ENCODE measurements at regions of chr4 and their contacts with region 1.

Region 1: GRCh38 chr4:87235020-87235671 is 14.7 kb upstream of the KLHL8 start:
- DNase-seq: no peak
- H3K4me3 ChIP-seq: peak overlapping the region; percentile 47
- H3K27ac ChIP-seq: no peak overlapping the region
- H3K4me1 ChIP-seq: no peaks in the 10 kb centered on the region
- CTCF ChIP-seq: no peak

Region 2: DNA sequence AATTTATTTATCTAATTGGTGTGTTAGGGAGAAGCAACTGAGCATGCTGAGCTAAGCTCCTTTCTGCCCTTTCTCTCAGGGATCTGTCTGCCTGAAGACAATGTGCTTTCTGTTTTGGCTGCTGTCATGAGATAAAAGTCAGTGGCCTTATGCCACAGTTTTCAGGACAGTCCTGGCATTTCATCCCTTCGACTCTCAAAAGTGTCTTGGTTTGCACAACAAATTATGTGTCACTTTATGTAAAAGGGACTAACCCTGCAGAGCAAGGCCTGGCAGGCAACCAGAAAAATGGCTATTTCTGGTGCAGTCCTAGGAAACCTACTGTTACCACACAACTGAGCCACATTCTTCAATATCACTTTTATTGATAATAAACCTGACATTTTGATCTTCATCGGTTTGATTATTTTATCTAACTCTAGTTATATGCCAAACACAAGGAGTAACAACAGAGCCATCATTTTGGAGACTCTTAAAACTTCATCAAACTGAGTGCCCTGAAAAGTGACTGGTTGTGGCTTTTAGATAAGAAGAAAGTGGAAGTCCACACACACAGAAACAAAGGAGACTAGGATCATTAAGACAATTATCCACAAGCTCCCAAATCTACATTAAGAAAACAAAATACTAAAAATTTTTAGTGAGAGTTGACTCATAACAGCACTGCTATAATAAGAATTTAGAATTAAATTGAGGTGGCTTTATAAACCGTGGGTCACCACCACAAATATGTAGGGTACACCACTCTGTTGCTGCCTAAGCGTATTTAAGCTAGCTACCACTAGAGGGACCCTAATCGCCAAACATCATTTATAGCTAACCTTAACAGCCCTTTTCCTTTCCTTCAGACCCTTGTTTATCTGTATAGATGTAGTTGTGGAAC is 736.9 kb before region 1 on chr4:
- CTCF ChIA-PET with region 1: no interaction called
- POLR2A ChIA-PET with region 1: no interaction called
- intact Hi-C with region 1: loop called (anchors 5 kb)
- DNase-seq: peak; percentile 50
- H3K4me3 ChIP-seq: no peak overlapping the region
- H3K27ac ChIP-seq: no peak overlapping the region
- H3K4me1 ChIP-seq: no peaks in the 10 kb centered on the region
- CTCF ChIP-seq: peak; percentile 92

Region 3: DNA sequence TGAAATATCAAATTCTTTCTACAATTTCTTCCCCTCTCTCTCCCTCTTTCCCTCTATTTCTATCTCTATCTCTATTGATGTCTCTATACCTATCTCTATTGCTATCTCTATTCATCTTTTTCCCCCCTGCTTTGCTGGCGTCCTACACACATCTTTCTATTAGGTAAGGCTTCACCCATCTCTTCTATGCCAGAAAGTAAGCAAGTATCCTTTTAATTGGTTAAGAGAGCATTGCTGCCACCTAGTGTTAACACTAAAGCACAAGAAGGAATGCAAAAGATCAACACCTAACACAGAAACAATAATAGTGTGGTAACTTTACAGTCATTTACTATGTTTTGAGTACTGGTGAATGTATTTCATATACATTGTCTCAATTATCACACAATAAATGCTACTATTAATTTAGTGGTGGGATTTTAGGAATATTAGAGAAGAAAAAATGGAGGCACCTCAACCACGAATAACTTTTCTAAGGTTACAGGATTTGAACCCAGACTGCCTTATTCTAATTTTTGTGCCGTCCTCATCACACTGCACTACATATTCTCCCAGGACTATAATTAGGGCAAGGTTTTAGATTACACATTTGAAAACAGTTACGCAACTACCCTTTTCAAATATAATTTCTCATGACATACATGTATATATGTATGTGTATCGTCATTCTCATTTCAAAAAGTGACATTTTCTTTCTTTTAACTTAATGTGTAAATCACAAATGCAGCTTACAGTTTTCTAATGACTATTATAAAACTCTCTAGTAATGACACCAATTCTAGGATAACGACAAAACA is 339.3 kb before region 1 on chr4:
- CTCF ChIA-PET with region 1: no interaction called
- POLR2A ChIA-PET with region 1: no interaction called
- intact Hi-C with region 1: loop called (anchors 5 kb)
- DNase-seq: peak; percentile 73
- H3K4me3 ChIP-seq: no peak overlapping the region
- H3K27ac ChIP-seq: no peak overlapping the region
- H3K4me1 ChIP-seq: no peaks in the 10 kb centered on the region
- CTCF ChIP-seq: peak; percentile 96

Region 4: DNA sequence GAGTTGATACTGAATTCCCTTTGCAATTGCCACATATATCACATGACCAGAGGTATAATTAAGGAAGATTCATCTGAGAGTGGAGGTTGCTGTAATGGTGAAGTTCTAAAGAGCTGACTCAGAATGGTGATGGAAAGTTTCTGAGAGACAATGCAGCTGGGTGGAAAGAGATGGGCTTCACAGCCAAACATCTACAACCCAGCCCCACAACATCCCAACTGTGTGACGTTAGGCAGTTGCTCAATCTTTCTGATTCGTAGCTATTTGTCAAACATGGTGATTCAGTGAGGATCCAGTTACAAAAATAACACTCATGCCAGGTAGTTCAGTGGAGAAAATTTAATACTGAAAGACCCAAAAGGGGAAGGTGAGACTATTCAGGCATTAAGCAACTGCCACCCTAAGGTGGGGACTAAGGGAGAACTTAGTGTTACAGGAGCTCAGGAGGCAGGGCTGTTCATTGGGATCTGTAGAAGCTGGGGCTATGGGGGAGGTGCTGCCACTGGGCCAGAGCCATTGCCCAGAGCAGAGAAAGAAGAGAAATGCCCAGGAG is 307.2 kb before region 1 on chr4:
- CTCF ChIA-PET with region 1: no interaction called
- POLR2A ChIA-PET with region 1: no interaction called
- intact Hi-C with region 1: loop called (anchors 5 kb)
- DNase-seq: no peak
- H3K4me3 ChIP-seq: no peak overlapping the region
- H3K27ac ChIP-seq: peak overlapping the region; percentile 5
- H3K4me1 ChIP-seq: peaks cover 48% of the 10 kb centered on the region
- CTCF ChIP-seq: no peak

Region 5: GRCh38 chr4:87103691-87104187 is 131.4 kb before region 1 on chr4:
- CTCF ChIA-PET with region 1: no interaction called
- POLR2A ChIA-PET with region 1: no interaction called
- intact Hi-C with region 1: no loop called
- DNase-seq: no peak
- H3K4me3 ChIP-seq: no peak overlapping the region
- H3K27ac ChIP-seq: no peak overlapping the region
- H3K4me1 ChIP-seq: peaks cover 10% of the 10 kb centered on the region
- CTCF ChIP-seq: no peak

Region 6: DNA sequence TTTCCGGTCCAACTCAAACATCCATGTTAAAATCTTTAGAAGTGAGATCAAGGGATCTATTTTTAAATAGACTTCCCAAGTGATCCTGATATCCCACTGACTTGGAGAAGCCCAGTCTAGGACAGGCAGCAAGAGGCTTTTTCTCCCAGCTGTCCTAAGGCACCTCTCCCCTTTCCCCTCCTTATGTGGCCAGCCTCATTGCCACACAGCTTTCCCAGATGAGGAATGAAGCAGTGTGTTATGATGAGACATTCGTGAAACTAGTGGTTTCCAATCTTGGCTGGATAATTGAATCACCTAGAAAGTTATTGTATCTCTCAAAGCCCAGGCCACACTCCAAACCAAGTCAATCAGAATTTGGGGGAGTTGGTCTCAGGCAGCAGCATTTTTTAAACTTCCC is 104.3 kb after region 1 on chr4:
- CTCF ChIA-PET with region 1: no interaction called
- POLR2A ChIA-PET with region 1: no interaction called
- intact Hi-C with region 1: no loop called
- DNase-seq: no peak
- H3K4me3 ChIP-seq: no peak overlapping the region
- H3K27ac ChIP-seq: no peak overlapping the region
- H3K4me1 ChIP-seq: no peaks in the 10 kb centered on the region
- CTCF ChIP-seq: no peak

Measured in OCI-LY7 (cell line).